ENCODE measurements at regions of chr4 and their contacts with region 1.

Region 1: DNA sequence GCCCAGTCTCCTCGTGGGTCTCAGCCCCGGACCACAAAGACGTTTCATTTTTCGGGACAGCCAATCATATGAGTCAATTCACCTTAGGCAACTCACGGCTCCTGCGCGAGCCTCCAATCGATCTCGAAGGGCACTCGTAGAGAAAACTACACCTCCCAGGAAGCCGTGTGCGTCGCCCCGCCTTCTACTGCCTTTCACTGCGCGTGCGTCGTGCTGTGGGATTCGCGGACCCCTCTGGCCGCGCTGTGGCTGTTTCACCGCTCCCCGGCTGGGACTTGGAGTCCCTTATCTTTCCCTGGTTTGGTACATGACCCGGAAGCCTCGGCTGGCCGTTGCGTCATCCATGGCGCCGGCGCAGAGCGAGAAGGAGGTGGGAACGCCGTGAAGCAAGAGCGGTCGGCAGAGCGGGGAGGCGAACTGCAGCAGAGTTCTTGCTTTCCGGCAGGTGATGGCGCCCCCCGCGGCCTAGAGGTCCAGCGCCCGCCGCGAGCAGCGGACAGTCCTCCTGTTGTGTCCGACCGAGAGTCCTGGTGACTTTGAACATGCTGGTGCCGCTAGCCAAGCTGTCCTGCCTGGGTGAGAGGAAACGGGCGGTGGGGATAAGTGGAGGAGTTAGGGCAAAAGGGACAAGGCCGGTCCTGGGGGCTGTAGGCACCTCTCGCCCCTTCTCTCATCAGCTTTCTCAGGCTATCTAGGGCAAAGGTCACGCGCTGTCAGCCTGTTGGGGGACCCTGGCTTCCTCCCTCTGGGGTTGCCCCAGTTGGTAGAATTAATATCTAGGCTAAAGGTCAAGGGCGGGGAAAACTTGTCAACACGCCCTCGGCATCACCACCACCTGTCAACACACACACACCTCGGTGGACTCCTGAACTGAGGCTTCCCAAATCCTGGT is at the start of gene ETFDH:
- DNase-seq: peak; percentile 99
- total RNA-seq, gene ETFDH: 131 TPM

Region 2: GRCh38 chr4:158624889-158625478 is 47.2 kb before region 1 on chr4:
- intact Hi-C with region 1: loop called (anchors 5 kb)
- DNase-seq: no peak

Region 3: GRCh38 chr4:158722917-158723793 is 51.0 kb after region 1 on chr4 and contains the start of gene PPID:
- intact Hi-C with region 1: loop called (anchors 5 kb)
- DNase-seq: peak; percentile 95
- total RNA-seq, gene PPID: 31.9 TPM

Region 4: DNA sequence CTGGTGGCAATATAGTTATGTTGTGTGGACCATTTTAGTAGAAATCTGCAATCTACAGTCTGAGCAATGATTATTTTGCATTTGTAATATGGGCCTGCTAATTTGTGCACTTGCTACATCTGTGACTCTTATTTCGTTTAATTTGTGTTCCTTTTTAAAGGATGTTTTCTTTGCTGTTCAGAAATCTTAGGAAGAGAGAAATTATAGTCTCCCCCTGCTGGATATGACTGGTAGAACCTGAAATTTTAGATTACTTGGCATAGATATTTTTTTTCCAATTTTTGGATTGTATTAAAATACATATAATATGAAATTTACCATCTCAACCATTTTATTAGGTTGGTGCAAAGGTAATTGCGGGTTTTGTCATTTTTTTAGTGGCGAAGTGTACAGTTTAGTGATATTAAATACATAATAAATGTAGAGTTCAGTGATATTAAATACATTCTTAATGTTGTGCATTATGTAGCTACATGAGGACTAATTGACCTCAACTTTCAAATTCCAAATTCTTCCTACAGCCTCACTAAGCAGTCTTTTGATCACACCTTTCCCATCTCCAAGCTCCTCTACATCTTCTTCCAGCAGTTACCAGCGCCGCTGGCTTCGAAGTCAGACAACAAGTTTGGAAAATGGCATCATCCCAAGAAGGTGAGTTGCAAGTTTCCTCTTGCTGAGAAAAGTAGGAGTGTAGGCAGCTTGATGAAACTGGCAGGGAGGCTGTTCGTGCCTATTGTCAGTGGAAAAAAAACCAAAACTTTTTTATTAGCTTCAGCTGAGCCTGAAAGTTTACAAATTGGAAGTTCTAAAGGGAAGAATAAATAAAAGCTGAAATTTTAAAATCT is 178.9 kb after region 1 on chr4:
- intact Hi-C with region 1: loop called (anchors 5 kb)
- DNase-seq: no peak

Measured in cardiac septum (tissue), 1 donor.